K562 (cell line): ENCODE measurements at regions of chr7 and their contacts with region 1.

Region 1: GRCh38 chr7:139915864-139916716 is 87.0 kb downstream of the TBXAS1 start:
- DNase-seq: peak; percentile 93 to 99 (median 95)
- ATAC-seq: peak; percentile 87
- H3K4me3 ChIP-seq: no peak overlapping the region
- H3K27ac ChIP-seq: peak overlapping the region; percentile 85
- H3K4me1 ChIP-seq: peaks cover 28 to 69% of the 10 kb centered on the region in 2 experiments
- H3K27me3 ChIP-seq: no peaks in the 10 kb centered on the region
- CTCF ChIP-seq: no peak
- EP300 ChIP-seq: peak; percentile 92
- POLR2A ChIP-seq: peak; percentile 60
- RAD21 ChIP-seq: peak; percentile 1 to 17; a peak in 2 of 4 replicates

Region 2: DNA sequence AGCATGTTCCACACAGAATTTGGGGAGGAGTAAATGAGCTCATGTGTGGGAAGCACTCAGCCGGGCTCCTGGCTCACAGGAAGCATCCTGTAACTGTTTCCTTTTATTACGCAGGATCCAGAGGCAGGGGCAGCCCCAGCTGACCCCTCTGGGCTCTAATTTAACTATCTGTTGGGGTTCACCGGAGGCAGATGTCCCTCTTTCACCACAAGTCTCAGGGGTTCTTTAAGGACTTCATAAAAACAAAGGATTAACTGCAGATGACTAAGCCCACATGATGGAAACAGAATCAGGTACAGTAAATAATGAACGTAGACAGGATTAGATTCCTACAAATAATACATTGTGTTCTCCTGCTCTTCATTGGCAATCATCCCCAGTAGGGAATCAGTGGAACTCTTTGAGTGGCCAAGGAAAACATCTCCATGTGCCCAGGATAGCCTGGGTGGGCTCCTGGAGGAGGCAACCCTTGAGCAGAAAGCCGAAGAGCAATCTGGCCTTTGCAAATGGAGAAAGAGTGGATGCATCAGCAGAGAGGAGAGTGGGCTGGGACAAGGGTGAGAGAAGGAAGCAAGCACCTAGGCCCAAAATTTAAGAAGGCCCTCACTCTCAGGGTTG is 62.5 kb before region 1 on chr7:
- CTCF ChIA-PET with region 1: no interaction called
- POLR2A ChIA-PET with region 1: no interaction called
- in situ Hi-C with region 1: no loop called
- intact Hi-C with region 1: loop called (anchors 1 kb)
- DNase-seq: peak in 1 of 4 experiments; percentile 43
- ATAC-seq: no peak
- H3K4me3 ChIP-seq: no peak overlapping the region
- H3K27ac ChIP-seq: no peak overlapping the region
- H3K4me1 ChIP-seq: peaks cover 13 to 43% of the 10 kb centered on the region in 2 experiments; a peak in 4 of 5 replicates
- H3K27me3 ChIP-seq: no peaks in the 10 kb centered on the region; a peak in 1 of 5 replicates
- CTCF ChIP-seq: no peak
- EP300 ChIP-seq: peak; percentile 25; the same call in 1 of the 2 replicates
- POLR2A ChIP-seq: no peak
- RAD21 ChIP-seq: no peak

Region 3: GRCh38 chr7:139987691-139988516 is 71.8 kb after region 1 on chr7:
- CTCF ChIA-PET with region 1: no interaction called
- POLR2A ChIA-PET with region 1: no interaction called
- in situ Hi-C with region 1: no loop called
- intact Hi-C with region 1: loop called (anchors 2 kb)
- DNase-seq: no peak
- ATAC-seq: no peak
- H3K4me3 ChIP-seq: no peak overlapping the region
- H3K27ac ChIP-seq: no peak overlapping the region
- H3K4me1 ChIP-seq: peaks cover 0 to 8% of the 10 kb centered on the region in 2 experiments; a peak in 3 of 5 replicates
- H3K27me3 ChIP-seq: peaks cover 2 to 26% of the 10 kb centered on the region in 2 experiments; a peak in 3 of 5 replicates
- CTCF ChIP-seq: peak; percentile 16 to 42 (median 33); a peak in 2 of 6 replicates
- EP300 ChIP-seq: no peak
- POLR2A ChIP-seq: no peak
- RAD21 ChIP-seq: no peak